ENCODE measurements at regions of chr17 and their contacts with region 1.

Region 1: DNA sequence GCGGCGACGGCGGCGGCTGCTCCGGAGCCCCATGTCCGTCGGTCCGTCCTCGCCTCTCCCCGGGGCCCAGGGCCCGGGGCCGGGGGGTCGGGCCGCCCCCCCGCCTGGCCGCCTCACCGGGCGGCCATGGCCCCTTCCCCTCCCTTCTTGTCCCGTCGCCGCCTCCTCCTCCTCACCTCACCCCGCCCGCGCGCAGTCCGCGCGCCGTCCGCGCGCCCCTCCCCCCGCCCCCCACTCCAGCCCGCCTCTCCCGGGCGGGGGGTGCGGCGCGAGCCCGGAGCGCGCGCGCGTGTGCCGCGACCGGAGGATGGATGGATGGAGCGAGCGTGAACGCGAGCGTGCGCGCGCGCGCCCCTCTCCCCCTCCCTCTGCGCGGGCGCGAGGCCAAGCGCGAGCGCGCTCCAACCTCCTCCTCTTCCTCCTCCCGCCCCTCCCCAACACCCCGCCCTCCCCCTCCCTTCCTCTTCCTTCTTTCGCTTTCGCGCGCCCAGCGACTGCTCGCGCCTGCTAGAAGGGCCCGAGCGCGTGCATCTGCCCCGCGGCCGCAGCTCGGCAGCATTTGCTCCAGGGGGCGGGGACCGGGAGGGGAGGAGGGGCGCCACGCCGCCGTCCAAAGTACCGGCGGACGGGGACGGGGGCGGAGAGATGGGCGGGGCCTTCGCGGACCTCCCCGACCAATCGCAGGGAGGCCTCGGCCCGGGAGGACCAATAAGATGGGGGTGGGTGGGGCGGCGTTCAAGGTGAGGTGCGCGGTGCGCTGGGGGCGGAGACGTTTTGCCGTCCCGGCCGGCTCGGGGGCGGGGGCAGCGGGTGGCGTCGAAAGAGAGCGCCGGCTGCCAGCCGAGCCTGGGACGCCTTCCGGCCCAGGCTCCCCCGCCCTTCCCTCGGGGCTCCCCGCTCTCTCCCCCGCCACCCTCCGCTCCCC is at the start of gene ATXN7L3:
- DNase-seq: peak; percentile 98 to 99 (median 99)
- H3K4me3 ChIP-seq: peak within 1 kb of the TSS; percentile 72 to 95 (median 82)
- H3K27ac ChIP-seq: peak within 1 kb of the TSS; percentile 72 to 92
- H3K4me1 ChIP-seq: peaks cover 6 to 49% (median 45%) of the 10 kb centered on the region in 4 experiments
- H3K27me3 ChIP-seq: no peaks in the 10 kb centered on the region

Region 2: GRCh38 chr17:44144966-44145739 is 54.7 kb before region 1 on chr17:
- CTCF ChIA-PET with region 1: no interaction called
- POLR2A ChIA-PET with region 1: no interaction called
- DNase-seq: no peak
- H3K4me3 ChIP-seq: no peak overlapping the region
- H3K27ac ChIP-seq: no peak overlapping the region
- H3K4me1 ChIP-seq: peaks cover 4 to 15% (median 12%) of the 10 kb centered on the region in 4 experiments
- H3K27me3 ChIP-seq: no peaks in the 10 kb centered on the region

Region 3: DNA sequence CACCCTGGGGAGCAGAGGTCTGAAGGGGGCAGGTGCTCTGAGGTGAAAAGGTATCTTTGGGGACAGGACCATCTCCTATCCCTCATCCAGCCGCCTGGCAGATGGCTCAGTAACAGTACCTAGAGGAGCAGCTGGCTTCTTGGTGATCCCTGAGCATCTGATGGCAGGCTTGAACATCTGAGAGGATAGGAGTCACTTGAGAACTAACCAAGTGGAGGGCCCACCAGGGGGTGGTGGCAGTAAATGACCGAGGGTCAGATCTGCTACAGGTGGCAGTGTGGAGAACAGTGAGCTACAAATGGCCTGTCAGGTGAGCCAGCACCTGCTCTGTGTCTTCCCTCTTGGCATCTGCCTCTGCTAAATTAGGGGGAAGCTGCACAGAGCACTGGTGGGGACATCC is 44.3 kb before region 1 on chr17:
- CTCF ChIA-PET with region 1: no interaction called
- POLR2A ChIA-PET with region 1: no interaction called
- DNase-seq: no peak
- H3K4me3 ChIP-seq: no peak overlapping the region
- H3K27ac ChIP-seq: no peak overlapping the region
- H3K4me1 ChIP-seq: peaks cover 0 to 6% (median 0%) of the 10 kb centered on the region in 4 experiments
- H3K27me3 ChIP-seq: no peaks in the 10 kb centered on the region

Region 4: GRCh38 chr17:44186307-44187130 is 13.3 kb before region 1 on chr17 and contains the start of gene TMUB2:
- CTCF ChIA-PET with region 1: interaction called, 6 read pairs
- POLR2A ChIA-PET with region 1: interaction called, 14 read pairs
- DNase-seq: peak; percentile 99 to 100 (median 99)
- H3K4me3 ChIP-seq: peak within 1 kb of the TSS; percentile 72 to 100 (median 97)
- H3K27ac ChIP-seq: peak within 1 kb of the TSS; percentile 98 to 99
- H3K4me1 ChIP-seq: peaks cover 5 to 27% (median 18%) of the 10 kb centered on the region in 4 experiments
- H3K27me3 ChIP-seq: no peaks in the 10 kb centered on the region

Region 5: DNA sequence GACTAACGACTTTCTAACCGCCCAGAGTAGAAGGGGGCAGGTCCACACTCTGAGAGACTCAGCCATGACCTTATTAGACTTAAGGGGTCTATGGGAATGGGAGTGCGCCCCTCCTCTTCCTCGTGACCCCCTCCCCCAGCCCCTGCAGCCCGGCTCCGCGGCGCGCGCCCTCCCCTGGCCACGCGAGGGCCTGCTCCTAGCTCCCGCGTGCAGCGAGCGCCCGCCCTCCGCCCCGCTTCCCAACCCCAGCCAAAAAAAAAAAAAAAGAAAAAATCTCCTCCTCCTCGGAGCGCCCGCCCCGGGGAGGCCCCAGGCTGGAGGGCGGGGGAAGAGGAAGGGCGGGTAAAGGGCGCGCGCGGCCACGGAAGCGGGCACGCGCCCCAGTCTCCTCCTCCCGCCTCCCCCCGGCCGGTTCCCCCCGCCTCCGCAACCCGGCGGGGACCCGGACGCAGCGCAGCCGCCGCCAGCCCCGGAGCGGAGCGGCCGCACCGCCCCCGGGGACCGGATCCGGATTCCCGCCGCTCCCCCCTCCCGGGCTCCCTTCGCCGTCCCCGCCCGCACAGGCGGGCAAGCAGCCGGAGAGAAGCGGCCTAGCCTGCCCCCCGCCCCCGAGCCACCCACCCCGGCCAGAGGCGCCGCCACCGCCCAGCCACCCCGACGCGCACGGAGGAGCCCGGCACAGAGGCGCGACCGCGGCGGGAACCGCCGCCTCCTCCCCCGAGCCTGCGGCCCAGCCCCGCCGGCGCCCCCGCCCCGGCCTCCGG is 18.7 kb after region 1 on chr17:
- CTCF ChIA-PET with region 1: interaction called, 12 read pairs
- POLR2A ChIA-PET with region 1: interaction called, 11 read pairs
- DNase-seq: peak; percentile 85 to 92 (median 91)
- H3K4me3 ChIP-seq: peak overlapping the region; percentile 74 to 94 (median 83)
- H3K27ac ChIP-seq: peak overlapping the region; percentile 30 to 86
- H3K4me1 ChIP-seq: peaks cover 15 to 41% (median 36%) of the 10 kb centered on the region in 4 experiments
- H3K27me3 ChIP-seq: no peaks in the 10 kb centered on the region

Region 6: GRCh38 chr17:44266402-44267164 is 66.8 kb after region 1 on chr17:
- CTCF ChIA-PET with region 1: no interaction called
- POLR2A ChIA-PET with region 1: no interaction called
- DNase-seq: peak; percentile 17 to 76 (median 53)
- H3K4me3 ChIP-seq: no peak overlapping the region
- H3K27ac ChIP-seq: no peak overlapping the region
- H3K4me1 ChIP-seq: peaks cover 0 to 3% (median 0%) of the 10 kb centered on the region in 4 experiments
- H3K27me3 ChIP-seq: no peaks in the 10 kb centered on the region

Region 7: DNA sequence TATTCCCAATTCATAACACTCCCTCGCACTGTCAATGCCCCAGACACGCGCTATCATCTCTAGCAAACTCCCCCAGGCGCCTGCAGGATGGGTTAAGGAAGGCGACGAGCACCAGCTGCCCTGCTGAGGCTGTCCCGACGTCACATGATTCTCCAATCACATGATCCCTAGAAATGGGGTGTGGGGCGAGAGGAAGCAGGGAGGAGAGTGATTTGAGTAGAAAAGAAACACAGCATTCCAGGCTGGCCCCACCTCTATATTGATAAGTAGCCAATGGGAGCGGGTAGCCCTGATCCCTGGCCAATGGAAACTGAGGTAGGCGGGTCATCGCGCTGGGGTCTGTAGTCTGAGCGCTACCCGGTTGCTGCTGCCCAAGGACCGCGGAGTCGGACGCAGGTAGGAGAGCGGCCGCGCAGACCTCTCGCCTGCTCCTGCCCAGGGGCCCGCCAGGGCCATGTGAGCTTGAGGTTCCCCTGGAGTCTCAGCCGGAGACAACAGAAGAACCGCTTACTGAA is 145.2 kb after region 1 on chr17 and contains the start of gene GRN:
- CTCF ChIA-PET with region 1: interaction called, 25 read pairs
- POLR2A ChIA-PET with region 1: interaction called, 6 read pairs
- DNase-seq: peak; percentile 90 to 93 (median 93)
- H3K4me3 ChIP-seq: peak within 1 kb of the TSS; percentile 78 to 97 (median 87)
- H3K27ac ChIP-seq: peak within 1 kb of the TSS in 1 of 2 experiments; percentile 75
- H3K4me1 ChIP-seq: peaks cover 5 to 30% (median 22%) of the 10 kb centered on the region in 4 experiments
- H3K27me3 ChIP-seq: peaks cover 0 to 3% (median 0%) of the 10 kb centered on the region in 5 experiments